ENCODE measurements at regions of chr2 and their contacts with region 1.

Region 1: DNA sequence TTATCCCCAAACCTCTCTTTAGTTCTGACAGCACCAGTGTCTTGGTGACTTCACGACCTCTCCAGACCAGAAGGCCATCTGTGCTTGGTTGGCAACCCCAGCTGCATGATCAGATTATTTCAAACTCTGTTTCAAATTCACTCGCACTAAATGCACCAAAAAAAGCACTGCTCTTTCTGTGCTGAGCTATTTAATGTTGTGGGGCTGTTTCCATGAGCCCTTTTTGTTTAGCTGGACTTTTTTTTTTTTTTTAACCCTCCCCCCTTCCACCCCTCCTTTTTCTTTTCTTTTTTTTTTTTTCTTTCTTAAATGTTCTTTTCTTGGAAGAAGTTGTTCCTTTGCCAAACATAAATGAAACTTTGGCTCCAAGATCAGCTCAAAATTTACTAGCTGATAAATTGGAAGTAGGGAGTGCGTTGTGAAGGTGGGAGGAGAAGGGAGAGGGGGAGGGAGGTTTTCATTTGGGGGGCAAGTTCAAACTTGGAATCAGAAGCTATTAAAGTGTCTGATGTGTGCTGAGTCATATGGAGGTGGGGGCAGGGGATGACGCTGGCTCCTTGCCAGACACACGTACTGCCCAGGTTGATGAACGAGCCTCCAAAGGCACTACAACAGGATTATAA is 543.0 kb upstream of the TNP1 start:
- DNase-seq: no peak
- H3K4me3 ChIP-seq: no peak overlapping the region
- H3K27ac ChIP-seq: no peak overlapping the region
- H3K4me1 ChIP-seq: peaks cover 9% of the 10 kb centered on the region
- H3K27me3 ChIP-seq: no peaks in the 10 kb centered on the region
- CTCF ChIP-seq: no peak

Region 2: DNA sequence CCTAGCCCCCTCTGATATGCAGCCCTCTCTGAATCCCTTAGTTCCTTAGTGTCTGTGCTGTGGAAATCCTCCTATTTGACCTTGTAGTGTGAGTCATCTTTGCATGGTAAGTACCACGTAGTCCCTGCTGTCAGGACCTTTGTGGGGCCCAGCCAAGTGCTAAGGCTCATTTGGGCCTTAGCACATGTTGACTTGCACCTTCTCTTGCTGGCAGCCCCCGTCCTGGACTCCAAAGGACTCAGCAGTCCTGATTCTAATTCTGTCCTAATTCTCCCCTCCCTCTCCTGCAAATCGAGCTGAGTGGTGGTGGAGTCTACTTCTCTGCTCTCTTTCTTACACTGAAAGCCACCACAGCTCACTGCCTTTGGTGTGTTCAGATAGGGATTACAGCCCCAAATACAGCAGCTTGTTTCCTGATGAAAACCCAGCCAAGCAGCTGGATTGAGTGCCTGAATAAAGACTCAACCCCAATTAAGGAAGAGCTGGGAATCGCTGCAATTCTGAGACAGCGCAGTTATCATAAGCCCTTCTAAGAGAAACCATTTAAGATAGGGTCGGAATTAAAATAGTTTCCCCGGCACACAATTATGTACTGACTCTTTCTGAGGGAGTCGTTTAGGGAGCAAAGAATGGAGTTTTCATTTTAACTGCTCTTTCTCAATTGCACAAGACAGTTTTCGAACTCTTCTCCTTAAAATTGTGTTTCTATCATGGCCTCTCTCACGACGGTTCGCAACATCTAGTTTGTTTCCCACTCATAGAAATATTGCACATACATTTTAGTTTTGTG is 327.4 kb before region 1 on chr2:
- CTCF ChIA-PET with region 1: no interaction called
- POLR2A ChIA-PET with region 1: no interaction called
- intact Hi-C with region 1: no loop called
- DNase-seq: no peak
- H3K4me3 ChIP-seq: no peak overlapping the region
- H3K27ac ChIP-seq: no peak overlapping the region
- H3K4me1 ChIP-seq: no peaks in the 10 kb centered on the region
- H3K27me3 ChIP-seq: no peaks in the 10 kb centered on the region
- CTCF ChIP-seq: no peak

Region 3: DNA sequence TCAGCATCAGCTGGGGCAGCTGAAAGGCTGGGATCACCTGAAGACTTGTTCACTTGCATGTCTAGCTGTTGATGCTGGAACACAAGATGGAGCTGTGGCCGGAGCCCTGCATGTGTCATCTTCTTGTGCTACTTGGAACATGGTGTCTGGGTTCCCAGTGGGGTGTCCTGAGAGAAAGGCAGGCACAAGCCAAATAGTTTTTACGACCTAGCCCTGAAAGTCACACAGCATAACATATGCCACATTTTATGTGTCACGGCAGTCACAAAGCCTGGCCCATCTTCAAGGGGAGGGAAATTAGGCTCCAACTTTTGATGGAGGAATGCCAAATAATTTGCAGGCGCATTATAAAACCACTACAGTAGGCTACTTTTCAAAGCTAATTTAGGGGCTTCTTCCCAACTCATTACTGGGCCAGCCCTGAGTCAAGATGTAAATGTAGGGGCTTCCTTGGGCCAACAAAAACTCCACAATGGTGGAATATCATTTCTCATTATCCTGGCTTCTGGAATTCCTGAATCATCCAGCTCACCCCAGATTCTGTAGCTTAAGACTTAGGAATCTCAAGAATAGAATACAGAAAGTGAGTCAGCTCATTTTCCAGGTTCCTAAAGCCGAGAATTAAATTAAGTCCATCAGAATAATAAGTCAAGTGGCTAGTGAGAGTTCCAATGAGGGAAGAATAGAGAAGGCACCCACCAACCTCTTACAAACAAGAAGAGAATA is 57.0 kb after region 1 on chr2:
- CTCF ChIA-PET with region 1: interaction called, 13 read pairs
- POLR2A ChIA-PET with region 1: no interaction called
- intact Hi-C with region 1: no loop called
- DNase-seq: peak; percentile 69
- H3K4me3 ChIP-seq: no peak overlapping the region
- H3K27ac ChIP-seq: no peak overlapping the region
- H3K4me1 ChIP-seq: no peaks in the 10 kb centered on the region
- H3K27me3 ChIP-seq: no peaks in the 10 kb centered on the region
- CTCF ChIP-seq: no peak